H1 (cell line): ENCODE measurements at regions of chr16 and their contacts with region 1.

Region 1: GRCh38 chr16:50284131-50284911 is 18.0 kb downstream of the ADCY7 start:
- DNase-seq: no peak
- H3K4me3 ChIP-seq: no peak overlapping the region
- H3K27ac ChIP-seq: no peak overlapping the region
- H3K4me1 ChIP-seq: peaks cover 0 to 5% (median 0%) of the 10 kb centered on the region in 4 experiments; a peak in 1 of 7 replicates
- H3K27me3 ChIP-seq: no peaks in the 10 kb centered on the region
- CTCF ChIP-seq: no peak
- EP300 ChIP-seq: no peak
- POLR2A ChIP-seq: no peak
- RAD21 ChIP-seq: no peak

Region 2: DNA sequence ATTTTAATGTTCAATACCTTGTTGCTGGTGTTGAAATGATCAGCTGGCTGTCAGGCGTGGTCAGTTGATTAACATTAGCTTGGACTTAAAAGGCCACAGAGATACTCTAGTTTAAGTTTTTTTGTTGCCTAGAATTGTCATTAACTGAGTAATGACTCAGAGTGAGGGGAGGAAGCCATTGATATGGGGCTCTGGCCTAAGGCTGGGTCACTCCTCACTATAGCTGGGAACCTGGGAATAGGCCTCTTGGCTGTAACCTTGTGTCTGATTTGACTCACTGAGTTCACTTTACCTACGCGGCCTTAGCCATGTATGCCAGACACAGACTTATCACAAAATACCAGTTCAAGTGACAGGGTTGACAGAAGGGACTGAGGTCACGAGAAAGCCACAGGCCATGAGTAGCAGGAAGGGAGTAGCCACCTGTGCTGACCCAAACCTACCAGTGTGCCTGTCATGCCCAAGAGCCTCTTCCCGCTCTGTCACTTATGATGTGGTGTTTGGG is 55.9 kb before region 1 on chr16:
- CTCF ChIA-PET with region 1: no interaction called
- POLR2A ChIA-PET with region 1: no interaction called
- DNase-seq: no peak
- H3K4me3 ChIP-seq: no peak overlapping the region
- H3K27ac ChIP-seq: no peak overlapping the region
- H3K4me1 ChIP-seq: no peaks in the 10 kb centered on the region
- H3K27me3 ChIP-seq: no peaks in the 10 kb centered on the region
- CTCF ChIP-seq: no peak
- EP300 ChIP-seq: no peak
- POLR2A ChIP-seq: no peak
- RAD21 ChIP-seq: no peak

Region 3: DNA sequence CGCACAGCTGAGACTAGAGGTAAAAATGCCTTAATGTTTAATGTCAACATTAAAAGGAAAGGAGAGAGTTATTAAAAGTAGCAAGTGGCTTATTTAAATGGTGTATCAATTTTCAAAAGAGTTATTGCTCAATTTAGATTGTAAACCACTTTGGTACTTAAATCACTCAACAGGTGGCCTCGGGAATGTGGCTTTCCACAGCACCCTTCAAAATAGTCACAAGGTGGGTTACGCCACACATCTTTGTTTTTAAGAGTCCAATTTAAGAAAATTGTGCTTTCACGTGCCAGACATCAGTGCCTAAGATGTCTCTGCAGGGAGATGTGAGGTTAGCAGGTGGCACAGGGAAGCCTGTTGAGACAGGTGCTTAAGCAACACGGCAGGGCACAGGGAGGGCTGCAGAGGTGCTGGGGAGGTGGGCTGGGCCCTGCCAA is 45.4 kb before region 1 on chr16:
- CTCF ChIA-PET with region 1: no interaction called
- POLR2A ChIA-PET with region 1: no interaction called
- DNase-seq: no peak
- H3K4me3 ChIP-seq: no peak overlapping the region
- H3K27ac ChIP-seq: no peak overlapping the region
- H3K4me1 ChIP-seq: no peaks in the 10 kb centered on the region
- H3K27me3 ChIP-seq: no peaks in the 10 kb centered on the region
- CTCF ChIP-seq: no peak
- EP300 ChIP-seq: no peak
- POLR2A ChIP-seq: no peak
- RAD21 ChIP-seq: no peak

Region 4: DNA sequence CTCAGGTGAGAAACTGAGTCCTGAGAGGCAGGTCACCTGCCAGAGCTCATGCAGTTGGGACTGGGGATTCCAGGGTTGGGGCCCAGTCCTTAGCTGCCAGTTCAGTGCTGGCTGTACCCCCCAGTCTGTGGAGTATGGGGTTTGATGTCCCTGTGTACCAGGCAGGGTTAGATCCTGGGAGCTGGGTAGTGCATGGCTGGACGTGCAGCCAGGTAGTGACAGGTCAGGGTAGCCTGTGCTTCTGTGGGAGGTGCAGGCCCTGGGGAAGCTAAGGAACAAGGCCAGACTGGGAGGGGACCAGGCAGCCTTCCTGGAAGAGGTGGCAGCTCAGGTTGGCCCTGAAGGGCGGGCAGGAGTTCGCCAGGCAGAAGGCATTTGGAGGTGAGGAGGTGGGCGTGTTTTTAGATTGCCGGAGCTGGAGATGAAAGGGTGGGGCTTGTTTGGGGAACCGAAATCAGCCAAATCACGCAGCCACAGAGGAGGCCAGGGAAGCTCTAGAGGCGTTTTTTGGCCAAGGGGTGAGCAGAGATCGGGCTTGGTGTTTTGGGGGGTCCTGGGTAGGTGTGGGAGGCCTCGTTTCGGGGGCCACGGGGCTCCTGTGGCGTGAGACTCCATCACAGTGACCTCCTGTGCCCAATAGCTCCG is 10.5 kb before region 1 on chr16:
- CTCF ChIA-PET with region 1: interaction called, 13 read pairs
- POLR2A ChIA-PET with region 1: interaction called, 3 read pairs
- DNase-seq: no peak
- H3K4me3 ChIP-seq: no peak overlapping the region
- H3K27ac ChIP-seq: no peak overlapping the region
- H3K4me1 ChIP-seq: no peaks in the 10 kb centered on the region
- H3K27me3 ChIP-seq: no peaks in the 10 kb centered on the region
- CTCF ChIP-seq: no peak
- EP300 ChIP-seq: no peak
- POLR2A ChIP-seq: no peak
- RAD21 ChIP-seq: no peak

Region 5: DNA sequence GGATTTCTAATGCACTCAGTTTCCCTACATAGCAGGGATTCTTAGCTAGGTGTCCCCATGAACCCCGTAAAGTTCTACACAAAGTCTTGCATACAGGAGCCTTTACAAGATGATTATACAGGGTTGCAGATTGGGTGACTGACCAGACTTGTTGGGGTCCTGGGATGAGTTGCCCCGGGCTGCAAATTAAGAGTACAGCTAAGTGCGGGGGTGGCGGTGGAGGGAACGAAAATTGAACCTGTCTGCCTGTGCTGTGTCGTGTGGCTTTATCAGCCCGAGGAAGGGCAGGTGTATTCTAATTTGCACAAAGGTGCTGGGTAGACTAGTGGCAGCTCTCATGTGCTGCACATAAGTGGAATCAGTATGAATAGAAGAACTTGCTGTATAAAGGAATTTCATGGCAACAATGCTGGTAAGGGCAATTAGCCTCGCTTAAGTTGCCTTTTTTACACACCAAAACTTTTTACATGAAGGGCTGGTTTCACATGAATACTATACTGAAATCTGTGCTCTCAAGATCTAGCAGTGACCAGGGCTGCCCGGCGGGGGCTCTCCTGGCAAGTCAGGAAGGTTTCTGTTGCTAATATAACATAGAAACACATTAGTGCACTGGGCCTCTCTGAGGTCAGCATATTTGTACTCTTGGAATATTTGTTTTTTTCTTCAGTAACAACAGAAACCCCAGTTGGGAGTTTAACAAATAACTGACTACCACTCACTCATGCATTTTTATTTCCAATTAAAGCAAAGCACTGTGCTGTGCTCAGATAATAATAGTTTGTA is 32.7 kb after region 1 on chr16:
- CTCF ChIA-PET with region 1: no interaction called
- POLR2A ChIA-PET with region 1: no interaction called
- DNase-seq: no peak
- H3K4me3 ChIP-seq: no peak overlapping the region
- H3K27ac ChIP-seq: no peak overlapping the region
- H3K4me1 ChIP-seq: no peaks in the 10 kb centered on the region; a peak in 1 of 7 replicates
- H3K27me3 ChIP-seq: no peaks in the 10 kb centered on the region
- CTCF ChIP-seq: no peak
- EP300 ChIP-seq: no peak
- POLR2A ChIP-seq: no peak
- RAD21 ChIP-seq: no peak

Region 6: GRCh38 chr16:50407351-50407750 is 123.0 kb after region 1 on chr16:
- CTCF ChIA-PET with region 1: no interaction called
- POLR2A ChIA-PET with region 1: no interaction called
- DNase-seq: peak in 1 of 2 experiments; percentile 58
- H3K4me3 ChIP-seq: no peak overlapping the region
- H3K27ac ChIP-seq: no peak overlapping the region
- H3K4me1 ChIP-seq: peaks cover 0 to 3% (median 0%) of the 10 kb centered on the region in 4 experiments; a peak in 1 of 7 replicates
- H3K27me3 ChIP-seq: no peaks in the 10 kb centered on the region
- CTCF ChIP-seq: no peak
- EP300 ChIP-seq: no peak
- POLR2A ChIP-seq: no peak
- RAD21 ChIP-seq: no peak